Naive thymus-derived CD4-positive, alpha-beta T cell (primary cell): ENCODE measurements at regions of chr9 and their contacts with region 1.

Region 1: DNA sequence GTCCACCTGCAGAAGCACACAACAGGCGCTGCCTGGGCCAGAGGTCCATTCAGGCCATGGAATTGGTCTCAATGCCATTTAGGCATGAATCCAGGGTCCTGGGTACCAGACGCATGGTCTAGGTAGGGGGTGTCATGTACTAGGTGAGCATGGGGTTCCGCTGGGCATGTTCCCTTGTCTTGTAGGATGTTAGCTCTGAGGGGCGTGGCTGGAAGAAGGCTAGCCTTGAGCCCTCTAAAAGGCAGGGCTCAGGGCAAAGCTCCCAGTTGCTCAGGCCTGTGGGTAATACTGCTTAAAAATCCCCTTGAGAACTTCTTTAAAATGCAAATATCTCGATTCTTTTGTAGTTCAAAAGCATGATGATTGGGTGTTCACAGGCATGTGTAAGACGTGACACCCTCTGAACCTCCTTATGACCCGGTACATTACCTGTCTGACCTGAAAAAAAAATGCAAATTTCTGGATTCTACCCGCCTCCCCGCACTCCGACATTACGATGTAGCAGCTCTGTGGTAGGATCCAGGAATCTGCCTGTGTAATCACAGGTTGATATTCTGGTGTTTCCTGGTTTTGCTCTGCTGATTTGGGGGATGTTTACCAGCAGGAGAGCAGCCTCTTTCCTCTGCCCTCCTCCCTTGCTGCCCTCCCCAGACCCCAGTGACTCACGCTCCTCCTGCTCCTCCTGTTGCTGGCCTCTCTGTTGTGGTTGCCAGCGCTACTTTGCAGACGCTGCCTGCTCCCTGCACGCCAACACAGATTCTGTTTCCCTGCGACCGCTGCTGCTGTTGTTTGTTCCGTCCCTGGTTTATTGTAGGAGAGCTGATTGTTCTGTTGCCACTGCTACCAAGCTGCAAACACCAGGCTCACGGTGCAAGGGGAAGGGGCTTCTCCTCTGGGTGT is 5.7 kb downstream of the TMC1 start:
- DNase-seq: peak; percentile 24 to 81 (median 63)
- ATAC-seq: peak; percentile 90
- H3K4me3 ChIP-seq: peak overlapping the region; percentile 28
- H3K4me3 Mint-ChIP-seq: peak overlapping the region; percentile 83 to 94 (median 88)
- H3K27ac ChIP-seq: peak overlapping the region; percentile 65
- H3K27ac Mint-ChIP-seq: peak overlapping the region; percentile 85 to 98 (median 92)
- H3K4me1 ChIP-seq: peaks cover 13 to 15% of the 10 kb centered on the region in 2 donors
- H3K4me1 Mint-ChIP-seq: peaks cover 11 to 56% (median 28%) of the 10 kb centered on the region in 7 donors
- H3K27me3 ChIP-seq: no peaks in the 10 kb centered on the region
- H3K27me3 Mint-ChIP-seq: no peaks in the 10 kb centered on the region

Region 2: DNA sequence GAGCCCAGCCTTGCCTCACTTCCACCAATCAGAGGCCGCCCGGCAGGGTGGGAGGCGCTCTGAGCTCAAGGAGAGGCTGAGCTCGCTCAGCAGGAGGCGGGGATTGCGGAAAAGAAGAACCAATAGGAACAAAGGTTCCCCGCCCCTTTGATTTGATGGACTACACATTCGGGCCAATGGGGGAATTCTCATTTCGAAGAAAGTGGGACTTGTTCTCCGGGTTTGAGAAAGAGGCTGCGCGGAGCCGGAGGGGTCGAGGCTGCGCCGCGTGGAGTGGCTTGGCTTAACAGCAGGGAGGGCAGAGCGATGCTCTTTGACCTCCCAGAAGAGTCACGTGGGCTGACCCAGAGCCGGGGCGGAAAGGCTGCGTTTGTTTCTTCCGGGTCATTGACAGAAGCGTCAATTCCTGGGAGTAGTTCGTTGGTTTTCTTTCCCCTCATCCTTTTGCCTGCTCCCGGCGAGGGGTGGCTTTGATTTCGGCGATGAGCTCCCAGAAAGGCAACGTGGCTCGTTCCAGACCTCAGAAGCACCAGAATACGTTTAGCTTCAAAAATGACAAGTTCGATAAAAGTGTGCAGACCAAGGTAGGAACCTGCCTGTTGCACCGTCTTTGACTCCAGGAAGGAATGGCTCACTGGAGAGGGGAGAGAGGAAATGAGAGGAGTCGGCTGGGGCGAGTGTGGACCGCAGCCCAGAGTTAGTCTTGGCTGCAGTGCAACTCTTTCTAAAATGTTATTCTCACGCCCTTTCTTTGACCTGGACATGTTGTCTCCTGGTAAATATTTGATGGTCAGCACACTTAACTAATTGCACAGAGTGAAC is 615.7 kb before region 1 on chr9 and contains the start of gene C9orf85:
- CTCF ChIA-PET with region 1: no interaction called
- POLR2A ChIA-PET with region 1: no interaction called
- intact Hi-C with region 1: loop called in 1 of 2 experiments (anchors 1 kb)
- DNase-seq: peak; percentile 84 to 98 (median 95)
- ATAC-seq: peak; percentile 96
- H3K4me3 ChIP-seq: peak within 1 kb of the TSS; percentile 83
- H3K4me3 Mint-ChIP-seq: peak within 1 kb of the TSS; percentile 95 to 100 (median 100)
- H3K27ac ChIP-seq: peak within 1 kb of the TSS; percentile 74
- H3K27ac Mint-ChIP-seq: peak within 1 kb of the TSS; percentile 90 to 99 (median 95)
- H3K4me1 ChIP-seq: peaks cover 15 to 22% of the 10 kb centered on the region in 2 donors
- H3K4me1 Mint-ChIP-seq: peaks cover 47 to 80% (median 67%) of the 10 kb centered on the region in 7 donors
- H3K27me3 ChIP-seq: peaks cover 0 to 3% of the 10 kb centered on the region in 2 donors
- H3K27me3 Mint-ChIP-seq: no peaks in the 10 kb centered on the region
- total RNA-seq, gene C9orf85: 4.8 to 10.3 (median 8.6) TPM

Region 3: GRCh38 chr9:72443855-72444254 is 83.3 kb before region 1 on chr9:
- CTCF ChIA-PET with region 1: no interaction called
- POLR2A ChIA-PET with region 1: interaction called, 4 read pairs
- intact Hi-C with region 1: loop called (anchors 1 kb)
- DNase-seq: no peak
- ATAC-seq: peak; percentile 80
- H3K4me3 ChIP-seq: no peak overlapping the region
- H3K4me3 Mint-ChIP-seq: peak overlapping the region in 2 of 10 donors; percentile 45 to 58
- H3K27ac ChIP-seq: no peak overlapping the region
- H3K27ac Mint-ChIP-seq: peak overlapping the region in 3 of 9 donors; percentile 28 to 80 (median 61)
- H3K4me1 ChIP-seq: peaks cover 0 to 11% of the 10 kb centered on the region in 2 donors
- H3K4me1 Mint-ChIP-seq: peaks cover 4 to 44% (median 14%) of the 10 kb centered on the region in 7 donors
- H3K27me3 ChIP-seq: no peaks in the 10 kb centered on the region
- H3K27me3 Mint-ChIP-seq: peaks cover 0 to 2% (median 0%) of the 10 kb centered on the region in 5 donors

Region 4: DNA sequence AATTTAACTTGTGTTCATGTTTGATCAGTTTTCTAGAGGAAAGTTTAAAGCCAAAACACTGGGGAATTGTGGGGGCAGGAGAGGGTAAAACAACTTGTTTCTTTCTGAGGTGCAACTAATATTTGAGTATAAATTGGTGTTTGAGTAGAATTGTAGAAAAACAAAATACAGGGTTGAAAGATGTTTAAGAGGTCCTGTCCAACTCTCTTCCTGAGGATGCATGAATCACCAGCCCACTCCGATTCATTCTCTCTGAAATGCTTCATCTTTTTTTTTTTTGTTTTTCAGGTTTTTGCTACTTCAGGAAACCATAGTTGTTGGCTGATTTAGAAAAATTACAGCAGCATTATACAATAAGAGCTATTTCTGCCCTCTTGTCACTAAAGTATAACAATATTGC is 48.2 kb before region 1 on chr9:
- CTCF ChIA-PET with region 1: no interaction called
- POLR2A ChIA-PET with region 1: interaction called, 3 read pairs
- intact Hi-C with region 1: loop called in 1 of 2 experiments (anchors 1 kb)
- DNase-seq: no peak
- ATAC-seq: no peak
- H3K4me3 ChIP-seq: no peak overlapping the region
- H3K4me3 Mint-ChIP-seq: peak overlapping the region in 7 of 10 donors; percentile 46 to 80 (median 62)
- H3K27ac ChIP-seq: no peak overlapping the region
- H3K27ac Mint-ChIP-seq: peak overlapping the region in 1 of 9 donors; percentile 80
- H3K4me1 ChIP-seq: peaks cover 0 to 6% of the 10 kb centered on the region in 2 donors
- H3K4me1 Mint-ChIP-seq: peaks cover 8 to 43% (median 19%) of the 10 kb centered on the region in 7 donors
- H3K27me3 ChIP-seq: no peaks in the 10 kb centered on the region
- H3K27me3 Mint-ChIP-seq: no peaks in the 10 kb centered on the region

Region 5: DNA sequence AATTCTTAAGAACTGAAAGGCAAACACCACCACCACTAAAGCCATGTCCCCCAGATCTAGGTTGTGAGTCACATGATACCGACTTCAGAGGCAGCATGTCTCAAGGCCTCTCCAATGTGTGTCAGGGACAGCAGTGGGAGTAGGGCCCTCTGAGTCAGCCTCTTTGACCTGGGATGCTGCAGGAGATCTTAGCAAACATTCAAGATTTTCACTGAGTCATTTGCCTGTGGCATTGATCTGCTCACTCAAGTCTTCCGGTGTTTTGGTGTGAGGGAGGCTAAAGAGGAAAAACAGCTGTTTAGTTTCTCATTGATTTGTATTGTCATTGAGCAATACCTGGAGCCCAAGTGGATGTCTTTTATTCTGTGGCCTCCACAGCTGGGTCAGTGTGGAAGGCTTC is 30.4 kb after region 1 on chr9:
- CTCF ChIA-PET with region 1: no interaction called
- POLR2A ChIA-PET with region 1: no interaction called
- intact Hi-C with region 1: loop called (anchors 2 to 5 kb)
- DNase-seq: peak in 1 of 9 donors; percentile 57
- ATAC-seq: peak; percentile 26
- H3K4me3 ChIP-seq: no peak overlapping the region
- H3K4me3 Mint-ChIP-seq: peak overlapping the region in 1 of 10 donors; percentile 4
- H3K27ac ChIP-seq: no peak overlapping the region
- H3K27ac Mint-ChIP-seq: peak overlapping the region in 1 of 9 donors; percentile 89
- H3K4me1 ChIP-seq: no peaks in the 10 kb centered on the region
- H3K4me1 Mint-ChIP-seq: peaks cover 0 to 13% (median 0%) of the 10 kb centered on the region in 7 donors
- H3K27me3 ChIP-seq: no peaks in the 10 kb centered on the region
- H3K27me3 Mint-ChIP-seq: peaks cover 0 to 5% (median 0%) of the 10 kb centered on the region in 5 donors

Region 6: DNA sequence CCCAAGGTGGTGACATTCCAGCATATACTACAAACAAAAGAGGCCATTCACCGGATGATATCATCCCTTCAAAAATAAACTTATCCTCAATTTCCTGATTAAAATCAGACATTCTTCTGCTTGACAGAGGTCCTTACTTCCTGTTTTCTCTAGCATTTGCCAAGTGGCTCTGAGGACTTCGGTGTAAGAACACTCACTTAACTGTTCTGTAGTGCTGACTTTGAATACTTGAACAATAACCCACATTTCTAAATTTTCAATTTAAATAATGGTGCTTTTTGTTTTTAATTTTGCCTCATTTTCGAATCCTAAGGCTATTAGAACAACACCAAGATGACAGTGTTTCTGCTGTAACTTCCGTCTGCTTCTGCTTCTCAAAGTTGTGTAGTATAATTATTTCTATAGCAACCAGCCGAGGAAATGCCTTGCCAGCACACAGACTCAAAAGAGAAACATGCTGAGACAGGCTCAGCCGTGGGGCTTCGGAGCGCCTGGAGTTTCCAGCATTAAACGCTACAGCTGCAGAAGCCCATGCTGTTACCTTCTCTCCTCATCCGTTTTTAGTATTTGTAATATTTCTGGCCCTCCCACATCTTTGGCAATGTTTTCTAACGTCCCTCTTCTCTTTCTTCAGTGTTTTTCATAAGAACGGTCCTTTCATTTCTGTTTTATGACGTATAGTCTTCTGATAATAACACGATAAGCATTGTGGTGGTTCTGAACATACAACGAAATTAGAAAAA is 605.1 kb after region 1 on chr9:
- CTCF ChIA-PET with region 1: no interaction called
- POLR2A ChIA-PET with region 1: no interaction called
- intact Hi-C with region 1: loop called (anchors 1 to 5 kb)
- DNase-seq: peak; percentile 51 to 91 (median 85)
- ATAC-seq: peak; percentile 97
- H3K4me3 ChIP-seq: peak overlapping the region; percentile 78
- H3K4me3 Mint-ChIP-seq: peak overlapping the region; percentile 74 to 97 (median 90)
- H3K27ac ChIP-seq: peak overlapping the region; percentile 90
- H3K27ac Mint-ChIP-seq: peak overlapping the region; percentile 93 to 99 (median 95)
- H3K4me1 ChIP-seq: peaks cover 9% of the 10 kb centered on the region in 2 donors
- H3K4me1 Mint-ChIP-seq: peaks cover 20 to 47% (median 37%) of the 10 kb centered on the region in 7 donors
- H3K27me3 ChIP-seq: no peaks in the 10 kb centered on the region
- H3K27me3 Mint-ChIP-seq: no peaks in the 10 kb centered on the region